MCF 10A (cell line): ENCODE measurements at regions of chr5 and their contacts with region 1.

Region 1: GRCh38 chr5:152349683-152350526 is 55.2 kb downstream of the NMUR2 start:
- DNase-seq: peak; percentile 70
- H3K4me3 Mint-ChIP-seq: no peak overlapping the region
- H3K27ac Mint-ChIP-seq: no peak overlapping the region
- H3K4me1 Mint-ChIP-seq: no peaks in the 10 kb centered on the region
- H3K27me3 Mint-ChIP-seq: no peaks in the 10 kb centered on the region
- CTCF ChIP-seq: peak; percentile 97

Region 2: DNA sequence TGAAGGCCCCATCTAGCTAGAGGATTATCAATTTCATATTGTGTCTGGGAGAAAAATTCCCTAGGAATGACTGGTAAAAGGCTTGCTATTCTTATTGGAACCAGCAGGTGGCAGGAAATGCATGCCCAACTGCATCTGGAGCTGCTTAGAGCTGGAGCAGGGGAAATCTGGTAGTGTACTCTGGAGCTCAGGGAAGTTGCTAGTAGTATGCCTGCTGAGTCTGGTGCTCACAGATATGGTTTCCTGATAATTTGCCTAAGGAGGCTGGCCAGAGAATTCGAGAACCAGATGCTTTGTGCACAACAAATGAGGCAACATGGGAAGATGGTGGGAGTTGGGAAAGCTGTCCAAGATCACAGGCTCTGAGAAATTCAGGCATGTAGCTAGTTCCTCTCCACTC is 524.5 kb before region 1 on chr5:
- CTCF ChIA-PET with region 1: interaction called, 136 read pairs
- POLR2A ChIA-PET with region 1: no interaction called
- intact Hi-C with region 1: loop called (anchors 2 kb)
- DNase-seq: peak; percentile 81
- H3K4me3 Mint-ChIP-seq: no peak overlapping the region
- H3K27ac Mint-ChIP-seq: no peak overlapping the region
- H3K4me1 Mint-ChIP-seq: no peaks in the 10 kb centered on the region
- H3K27me3 Mint-ChIP-seq: no peaks in the 10 kb centered on the region
- CTCF ChIP-seq: peak; percentile 94

Region 3: GRCh38 chr5:152315942-152316341 is 34.0 kb before region 1 on chr5:
- CTCF ChIA-PET with region 1: interaction called, 16 read pairs
- POLR2A ChIA-PET with region 1: no interaction called
- intact Hi-C with region 1: no loop called
- DNase-seq: no peak
- H3K4me3 Mint-ChIP-seq: no peak overlapping the region
- H3K27ac Mint-ChIP-seq: no peak overlapping the region
- H3K4me1 Mint-ChIP-seq: no peaks in the 10 kb centered on the region
- H3K27me3 Mint-ChIP-seq: peaks cover 12% of the 10 kb centered on the region
- CTCF ChIP-seq: no peak

Region 4: GRCh38 chr5:152364899-152365298 is 15.0 kb after region 1 on chr5:
- CTCF ChIA-PET with region 1: interaction called, 52 read pairs
- POLR2A ChIA-PET with region 1: interaction called, 3 read pairs
- intact Hi-C with region 1: no loop called
- DNase-seq: no peak
- H3K4me3 Mint-ChIP-seq: no peak overlapping the region
- H3K27ac Mint-ChIP-seq: no peak overlapping the region
- H3K4me1 Mint-ChIP-seq: no peaks in the 10 kb centered on the region
- H3K27me3 Mint-ChIP-seq: peaks cover 12% of the 10 kb centered on the region
- CTCF ChIP-seq: no peak

Region 5: GRCh38 chr5:152389208-152389849 is 39.4 kb after region 1 on chr5:
- CTCF ChIA-PET with region 1: interaction called, 19 read pairs
- POLR2A ChIA-PET with region 1: no interaction called
- intact Hi-C with region 1: no loop called
- DNase-seq: no peak
- H3K4me3 Mint-ChIP-seq: no peak overlapping the region
- H3K27ac Mint-ChIP-seq: no peak overlapping the region
- H3K4me1 Mint-ChIP-seq: no peaks in the 10 kb centered on the region
- H3K27me3 Mint-ChIP-seq: no peaks in the 10 kb centered on the region
- CTCF ChIP-seq: no peak

Region 6: GRCh38 chr5:152514827-152515397 is 165.0 kb after region 1 on chr5:
- CTCF ChIA-PET with region 1: interaction called, 10 read pairs
- POLR2A ChIA-PET with region 1: no interaction called
- intact Hi-C with region 1: no loop called
- DNase-seq: peak; percentile 56
- H3K4me3 Mint-ChIP-seq: no peak overlapping the region
- H3K27ac Mint-ChIP-seq: no peak overlapping the region
- H3K4me1 Mint-ChIP-seq: no peaks in the 10 kb centered on the region
- H3K27me3 Mint-ChIP-seq: no peaks in the 10 kb centered on the region
- CTCF ChIP-seq: peak; percentile 36